Heart right ventricle (tissue), 16 donors: ENCODE measurements at regions of chr22 and their contacts with region 1.

Region 1: GRCh38 chr22:21952586-21953571 is at the start of gene PPM1F:
- DNase-seq: peak; percentile 85 to 91
- ATAC-seq: peak; percentile 81 to 93 (median 89)
- H3K4me3 ChIP-seq: peak within 1 kb of the TSS; percentile 45 to 80 (median 70)
- H3K27ac ChIP-seq: peak within 1 kb of the TSS; percentile 52 to 96 (median 88)
- H3K4me1 ChIP-seq: peaks cover 6 to 50% (median 44%) of the 10 kb centered on the region in 9 donors
- H3K27me3 ChIP-seq: no peaks in the 10 kb centered on the region
- CTCF ChIP-seq: peak; percentile 76 to 97 (median 87)
- total RNA-seq, gene PPM1F: 14.3 to 31.4 (median 19.0) TPM

Region 2: DNA sequence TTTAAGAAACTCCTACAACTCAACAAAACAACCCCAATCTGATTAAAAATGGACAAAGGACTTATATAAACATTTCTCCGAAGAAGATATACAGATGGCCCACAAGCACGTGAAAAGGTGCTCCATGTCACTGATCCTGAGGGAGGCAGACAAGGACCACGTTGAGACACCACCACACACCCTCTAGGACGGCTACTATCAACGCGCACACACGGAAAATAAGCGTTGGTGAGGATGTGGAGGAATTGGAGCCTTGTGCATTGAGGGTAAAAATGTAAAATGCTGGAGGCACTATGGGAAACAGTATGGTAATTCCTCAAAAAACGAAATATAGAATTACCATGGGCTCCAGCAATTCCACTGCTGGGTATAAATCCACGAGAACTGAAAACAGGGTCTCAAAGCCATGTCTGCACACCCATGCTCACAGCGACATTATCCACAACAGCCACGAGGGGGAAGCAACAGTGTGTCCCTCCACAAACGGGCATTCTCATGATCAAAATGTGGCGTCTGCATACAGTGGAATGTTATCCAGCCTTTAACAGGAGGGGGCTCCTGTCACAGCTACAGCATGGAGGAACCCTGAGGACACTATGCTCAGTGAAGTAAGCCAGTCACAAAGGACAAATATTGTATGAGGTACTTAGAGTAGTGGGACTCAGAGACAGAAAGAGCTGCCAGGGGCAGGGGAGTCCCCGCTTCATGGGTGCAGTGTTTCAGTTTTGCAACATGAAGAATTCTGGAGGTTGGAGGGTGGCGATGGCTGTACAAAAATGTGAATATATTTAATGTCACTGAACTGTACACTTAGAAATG is 239.8 kb before region 1 on chr22:
- intact Hi-C with region 1: loop called in 8 of 10 experiments (anchors 2 to 5 kb)
- DNase-seq: peak; percentile 44 to 70
- ATAC-seq: peak; percentile 86 to 96 (median 92)
- H3K4me3 ChIP-seq: peak overlapping the region in 5 of 10 donors; percentile 4 to 28 (median 13)
- H3K27ac ChIP-seq: peak overlapping the region in 2 of 10 donors; percentile 28 to 41
- H3K4me1 ChIP-seq: peaks cover 0 to 19% (median 9%) of the 10 kb centered on the region in 9 donors
- H3K27me3 ChIP-seq: no peaks in the 10 kb centered on the region
- CTCF ChIP-seq: peak; percentile 46 to 89 (median 77)

Region 3: GRCh38 chr22:21816787-21817496 is 135.9 kb before region 1 on chr22:
- intact Hi-C with region 1: loop called in 1 of 10 experiments (anchors 5 kb)
- DNase-seq: peak in 1 of 2 donors; percentile 51
- ATAC-seq: peak; percentile 67 to 93 (median 88)
- H3K4me3 ChIP-seq: peak overlapping the region in 4 of 10 donors; percentile 8 to 23 (median 20)
- H3K27ac ChIP-seq: peak overlapping the region; percentile 2 to 84 (median 70)
- H3K4me1 ChIP-seq: peaks cover 9 to 63% (median 47%) of the 10 kb centered on the region in 9 donors
- H3K27me3 ChIP-seq: no peaks in the 10 kb centered on the region
- CTCF ChIP-seq: no peak

Region 4: DNA sequence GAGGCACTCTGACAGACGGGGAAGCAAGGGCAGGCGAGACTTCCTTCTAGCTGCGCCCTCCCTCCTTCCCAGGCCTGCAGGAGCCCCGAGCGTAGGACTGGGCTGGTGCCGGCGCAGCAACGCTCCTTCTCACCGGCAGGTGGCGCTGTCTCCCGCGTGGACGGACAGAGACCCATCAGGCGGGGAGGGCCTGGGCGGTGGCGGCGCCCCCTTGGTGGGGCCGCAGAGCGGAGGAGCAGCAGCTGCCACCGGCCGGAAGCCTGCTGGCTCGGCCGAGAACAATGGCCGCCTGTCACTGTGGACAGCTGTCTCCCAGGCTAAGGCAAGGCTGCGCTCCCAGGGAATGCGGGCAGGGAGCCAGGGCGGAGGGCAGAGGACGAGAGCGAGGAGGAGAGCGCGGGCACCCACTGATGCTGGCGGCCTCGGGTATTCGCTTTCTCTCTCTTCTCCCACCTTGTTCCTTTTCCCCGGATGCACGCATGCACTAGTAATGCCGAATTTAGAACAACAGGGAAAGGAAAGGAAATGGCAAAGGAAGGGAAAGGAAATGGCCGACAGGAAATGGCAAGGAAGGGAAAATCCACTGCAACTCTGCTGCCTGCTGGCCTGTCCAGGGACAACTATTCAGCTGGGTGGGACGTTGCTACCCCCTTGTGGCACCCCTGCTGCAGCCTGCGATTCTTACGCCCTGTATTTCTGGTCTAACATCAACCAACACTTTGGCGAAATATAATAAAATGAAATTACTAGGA is 14.6 kb before region 1 on chr22:
- intact Hi-C with region 1: loop called in 5 of 10 experiments (anchors 2 kb)
- DNase-seq: peak; percentile 93 to 97
- ATAC-seq: peak; percentile 85 to 96 (median 90)
- H3K4me3 ChIP-seq: peak overlapping the region; percentile 22 to 67 (median 59)
- H3K27ac ChIP-seq: peak overlapping the region; percentile 90 to 98 (median 96)
- H3K4me1 ChIP-seq: peaks cover 35 to 85% (median 78%) of the 10 kb centered on the region in 9 donors
- H3K27me3 ChIP-seq: no peaks in the 10 kb centered on the region
- CTCF ChIP-seq: peak; percentile 90 to 99 (median 97)